ENCODE measurements at regions of chr7 and their contacts with region 1.

Region 1: DNA sequence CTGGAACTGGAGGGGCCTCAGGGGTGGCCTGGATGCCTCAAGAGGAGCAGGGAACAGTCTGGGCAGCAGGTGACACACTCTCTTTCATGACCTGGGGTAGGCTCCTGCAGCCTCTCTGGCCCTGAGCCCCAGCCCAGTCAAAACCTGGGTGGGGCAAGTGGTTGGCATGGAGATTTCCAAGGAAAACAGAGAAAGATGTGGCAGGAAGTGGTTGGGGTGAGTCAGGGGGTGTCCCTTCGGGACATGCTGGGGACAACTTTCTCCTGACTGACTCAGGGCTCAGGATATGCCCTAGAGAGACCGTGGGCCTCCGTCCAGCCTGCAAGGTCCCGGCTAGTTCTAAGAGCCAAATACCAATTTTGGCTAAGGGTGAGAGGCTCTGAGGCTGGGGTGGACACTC is 2.9 kb downstream of the AQP1 start:
- DNase-seq: peak in 1 of 4 experiments; percentile 53
- ATAC-seq: peak; percentile 29
- H3K4me3 ChIP-seq: peak overlapping the region; percentile 5; the same call in 1 of the 2 replicates
- H3K27ac ChIP-seq: peak overlapping the region; percentile 82
- H3K4me1 ChIP-seq: peaks cover 71 to 82% of the 10 kb centered on the region in 2 experiments
- H3K27me3 ChIP-seq: no peaks in the 10 kb centered on the region
- CTCF ChIP-seq: 0 out of 6 replicates have a peak, but pooled peaks of 1 of the 3 experiments have one; percentile 6
- EP300 ChIP-seq: no peak
- POLR2A ChIP-seq: no peak
- RAD21 ChIP-seq: no peak

Region 2: DNA sequence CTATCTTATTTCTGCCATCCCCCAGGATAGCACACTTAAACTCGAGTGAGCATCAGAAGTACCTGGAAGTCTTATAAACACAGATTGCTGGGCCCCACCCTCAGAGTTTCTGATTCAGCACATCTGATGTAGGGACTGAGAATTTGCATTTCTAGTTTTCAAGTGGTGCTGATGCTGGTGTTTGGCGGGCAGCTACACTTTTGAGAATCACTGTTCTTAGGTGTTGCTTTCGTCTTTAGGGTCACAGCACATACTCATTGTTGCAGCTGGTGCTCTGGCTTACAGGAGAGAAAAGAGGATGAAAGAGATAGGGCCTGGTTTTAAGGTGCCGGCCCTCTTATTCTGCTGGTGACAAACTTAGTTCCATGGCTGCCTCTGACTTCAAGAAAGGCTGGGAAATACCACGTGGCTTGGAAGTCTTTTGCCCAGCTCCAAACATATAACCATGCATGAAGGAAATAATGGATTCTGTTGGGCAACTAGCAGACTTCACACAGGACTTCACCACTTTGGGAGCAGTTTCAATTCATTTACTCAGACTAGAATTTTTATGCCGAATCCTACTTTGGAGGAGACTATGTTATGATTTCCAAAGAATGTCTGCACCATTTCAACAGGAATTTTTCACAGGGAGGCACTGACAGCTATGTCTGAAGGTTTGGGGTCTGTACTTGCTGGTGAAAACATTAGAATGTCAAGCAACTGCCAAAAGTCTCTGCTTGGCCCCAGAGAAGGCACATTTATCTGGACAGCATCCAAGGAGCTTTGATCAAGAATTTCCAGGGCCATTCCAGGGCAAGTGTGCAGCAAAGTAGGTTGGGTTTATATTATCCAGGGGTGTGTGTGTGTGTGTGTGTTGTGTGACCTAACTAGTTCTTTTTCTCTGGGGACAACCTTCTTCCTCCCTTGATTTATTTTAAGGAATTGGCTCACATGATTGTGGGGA is 150.3 kb before region 1 on chr7:
- CTCF ChIA-PET with region 1: no interaction called
- POLR2A ChIA-PET with region 1: no interaction called
- in situ Hi-C with region 1: no loop called
- intact Hi-C with region 1: loop called (anchors 1 kb)
- DNase-seq: no peak
- ATAC-seq: no peak
- H3K4me3 ChIP-seq: no peak overlapping the region
- H3K27ac ChIP-seq: no peak overlapping the region
- H3K4me1 ChIP-seq: peaks cover 20 to 49% of the 10 kb centered on the region in 2 experiments
- H3K27me3 ChIP-seq: no peaks in the 10 kb centered on the region
- CTCF ChIP-seq: no peak
- EP300 ChIP-seq: no peak
- POLR2A ChIP-seq: no peak
- RAD21 ChIP-seq: no peak

Region 3: GRCh38 chr7:30800785-30801252 is 113.8 kb before region 1 on chr7:
- CTCF ChIA-PET with region 1: no interaction called
- POLR2A ChIA-PET with region 1: no interaction called
- in situ Hi-C with region 1: no loop called
- intact Hi-C with region 1: no loop called
- DNase-seq: peak; percentile 62 to 72 (median 65)
- ATAC-seq: peak; percentile 89
- H3K4me3 ChIP-seq: no peak overlapping the region
- H3K27ac ChIP-seq: no peak overlapping the region
- H3K4me1 ChIP-seq: no peaks in the 10 kb centered on the region; a peak in 2 of 5 replicates
- H3K27me3 ChIP-seq: no peaks in the 10 kb centered on the region
- CTCF ChIP-seq: peak; percentile 70 to 83 (median 74)
- EP300 ChIP-seq: no peak
- POLR2A ChIP-seq: no peak
- RAD21 ChIP-seq: peak; percentile 74 to 85

Region 4: GRCh38 chr7:30925913-30926312 is 11.3 kb after region 1 on chr7:
- CTCF ChIA-PET with region 1: no interaction called
- POLR2A ChIA-PET with region 1: no interaction called
- in situ Hi-C with region 1: no loop called
- intact Hi-C with region 1: no loop called
- DNase-seq: no peak
- ATAC-seq: no peak
- H3K4me3 ChIP-seq: no peak overlapping the region
- H3K27ac ChIP-seq: no peak overlapping the region
- H3K4me1 ChIP-seq: peaks cover 16 to 23% of the 10 kb centered on the region in 2 experiments; a peak in 4 of 5 replicates
- H3K27me3 ChIP-seq: no peaks in the 10 kb centered on the region
- CTCF ChIP-seq: no peak
- EP300 ChIP-seq: no peak
- POLR2A ChIP-seq: no peak
- RAD21 ChIP-seq: no peak

Region 5: DNA sequence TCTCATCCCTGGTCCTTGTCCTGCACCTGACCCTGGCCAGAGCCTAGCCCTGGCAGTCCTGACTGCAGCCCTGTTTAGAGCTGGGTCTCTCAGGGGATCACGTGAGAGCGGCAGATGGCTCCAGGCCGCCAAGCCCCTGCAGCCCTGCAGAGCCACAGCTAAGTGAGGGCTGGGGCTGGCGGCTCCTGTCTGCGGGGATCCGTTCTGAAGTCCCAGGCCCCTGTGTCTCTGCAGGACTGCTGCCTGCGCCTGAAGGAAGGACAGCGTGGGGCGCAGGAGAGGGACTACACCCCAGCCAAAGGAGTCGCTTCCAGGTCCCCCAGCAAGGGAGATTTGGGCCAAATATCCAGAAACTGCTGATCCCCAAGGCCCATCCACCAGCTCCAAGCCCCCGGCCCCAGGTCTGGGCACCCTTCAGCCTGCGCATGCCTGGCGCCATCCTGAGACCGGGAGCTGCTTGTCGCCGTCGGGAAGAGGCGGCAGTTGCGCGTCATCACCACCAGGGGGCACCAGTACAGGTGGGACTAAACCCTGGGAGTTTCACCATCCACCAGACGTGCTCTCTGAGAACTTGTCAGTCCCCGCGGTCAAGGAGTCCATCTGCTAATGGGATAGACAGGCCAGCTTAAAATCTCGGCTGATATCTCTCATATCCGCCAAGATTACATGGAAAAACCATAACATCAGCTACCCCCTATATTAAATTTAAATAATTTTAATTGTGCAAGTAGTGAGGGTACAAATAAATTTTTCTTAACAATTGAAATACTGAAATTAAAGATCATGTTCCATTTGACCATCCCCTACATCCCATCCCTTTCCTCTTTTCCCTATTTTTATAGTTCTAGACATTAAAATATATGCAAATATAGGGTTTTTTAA is 24.1 kb after region 1 on chr7:
- CTCF ChIA-PET with region 1: no interaction called
- POLR2A ChIA-PET with region 1: interaction called, 3 read pairs
- in situ Hi-C with region 1: no loop called
- intact Hi-C with region 1: loop called (anchors 1 kb)
- DNase-seq: peak; percentile 83 to 90 (median 90)
- ATAC-seq: peak; percentile 94
- H3K4me3 ChIP-seq: no peak overlapping the region
- H3K27ac ChIP-seq: no peak overlapping the region
- H3K4me1 ChIP-seq: peaks cover 0 to 19% of the 10 kb centered on the region in 2 experiments; a peak in 3 of 5 replicates
- H3K27me3 ChIP-seq: no peaks in the 10 kb centered on the region
- CTCF ChIP-seq: peak; percentile 94 to 97 (median 95)
- EP300 ChIP-seq: no peak
- POLR2A ChIP-seq: no peak
- RAD21 ChIP-seq: peak; percentile 34 to 71; a peak in 2 of 4 replicates